ENCODE measurements at regions of chr2 and their contacts with region 1.

Region 1: DNA sequence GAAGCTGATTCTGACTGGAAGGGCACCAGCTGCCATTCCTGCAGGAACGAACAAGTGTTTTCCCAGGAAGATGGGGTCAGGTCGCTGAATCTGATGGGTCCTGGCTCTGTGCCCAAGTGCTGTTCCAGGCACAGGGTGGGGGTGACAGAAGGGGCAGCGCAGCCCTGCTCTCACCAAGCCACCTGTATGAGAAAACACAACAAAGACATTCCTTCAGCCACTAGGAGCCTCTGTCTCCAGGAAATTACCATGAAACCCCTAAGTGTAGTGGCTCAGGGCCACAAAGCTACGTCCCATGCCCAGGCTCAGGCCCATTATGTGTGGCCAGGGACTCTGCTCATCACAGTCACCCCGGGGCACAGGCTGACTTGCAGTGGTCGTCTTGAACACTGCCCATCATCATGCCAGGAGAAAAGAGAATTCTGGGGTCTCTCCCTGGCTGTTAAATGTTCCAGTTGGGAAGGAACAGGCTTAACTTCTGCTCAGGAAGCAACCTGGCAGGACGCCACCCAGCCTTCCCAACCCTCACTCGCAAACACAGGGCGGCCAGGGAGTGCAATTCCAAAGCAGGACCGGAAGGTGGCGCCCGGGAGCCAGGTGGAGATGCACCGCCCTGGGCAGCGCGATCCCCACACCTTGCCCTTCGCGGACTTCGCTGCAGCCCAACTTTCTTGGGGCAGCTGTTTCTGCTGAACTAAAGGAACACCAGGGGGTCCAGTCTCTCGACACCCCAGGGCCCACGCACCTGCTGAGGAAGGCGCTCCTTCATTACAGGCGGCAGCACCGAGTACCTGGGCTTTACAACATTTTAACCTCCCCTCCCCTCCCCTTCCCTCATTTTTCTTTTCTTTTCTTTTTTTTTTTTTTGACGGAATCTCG is 11.0 kb upstream of the SFTPB start:
- DNase-seq: peak; percentile 62
- ATAC-seq: peak; percentile 97
- H3K4me3 ChIP-seq: peak overlapping the region in 1 of 3 experiments; percentile 56; a peak in 1 of 6 replicates
- H3K27ac ChIP-seq: no peak overlapping the region
- H3K4me1 ChIP-seq: peaks cover 8% of the 10 kb centered on the region; the same call in 1 of the 2 replicates
- H3K27me3 ChIP-seq: peaks cover 1 to 19% of the 10 kb centered on the region in 2 experiments; a peak in 3 of 5 replicates
- CTCF ChIP-seq: peak; percentile 97
- EP300 ChIP-seq: no peak
- POLR2A ChIP-seq: no peak
- RAD21 ChIP-seq: peak; percentile 84

Region 2: GRCh38 chr2:85707304-85707703 is 28.3 kb after region 1 on chr2:
- CTCF ChIA-PET with region 1: interaction called, 36 read pairs
- POLR2A ChIA-PET with region 1: no interaction called
- in situ Hi-C with region 1: loop called (anchors 5 kb)
- intact Hi-C with region 1: loop called (anchors 1 kb)
- DNase-seq: peak; percentile 73
- ATAC-seq: peak; percentile 81
- H3K4me3 ChIP-seq: no peak overlapping the region
- H3K27ac ChIP-seq: no peak overlapping the region
- H3K4me1 ChIP-seq: peaks cover 11% of the 10 kb centered on the region
- H3K27me3 ChIP-seq: peaks cover 12 to 37% of the 10 kb centered on the region in 2 experiments; a peak in 4 of 5 replicates
- CTCF ChIP-seq: peak; percentile 92
- EP300 ChIP-seq: no peak
- POLR2A ChIP-seq: no peak
- RAD21 ChIP-seq: no peak

Region 3: GRCh38 chr2:85712849-85713602 is 34.0 kb after region 1 on chr2:
- CTCF ChIA-PET with region 1: interaction called, 36 read pairs
- POLR2A ChIA-PET with region 1: no interaction called
- in situ Hi-C with region 1: loop called (anchors 5 kb)
- intact Hi-C with region 1: no loop called
- DNase-seq: no peak
- ATAC-seq: no peak; the same call in 2 of the 3 replicates
- H3K4me3 ChIP-seq: no peak overlapping the region
- H3K27ac ChIP-seq: no peak overlapping the region
- H3K4me1 ChIP-seq: peaks cover 11% of the 10 kb centered on the region
- H3K27me3 ChIP-seq: peaks cover 13 to 67% of the 10 kb centered on the region in 2 experiments; a peak in 4 of 5 replicates
- CTCF ChIP-seq: no peak
- EP300 ChIP-seq: no peak
- POLR2A ChIP-seq: no peak
- RAD21 ChIP-seq: no peak